Activated CD4-positive, alpha-beta T cell treated with anti-CD3 and anti-CD28 coated beads for 36 hours (primary cell): ENCODE measurements at regions of chr14 and their contacts with region 1.

Region 1: GRCh38 chr14:105248368-105248756 is at the start of gene BTBD6:
- DNase-seq: peak; percentile 93
- ATAC-seq: peak; percentile 97
- H3K4me3 Mint-ChIP-seq: peak within 1 kb of the TSS; percentile 74
- H3K27ac Mint-ChIP-seq: peak within 1 kb of the TSS; percentile 51
- H3K4me1 Mint-ChIP-seq: peaks cover 15% of the 10 kb centered on the region
- H3K27me3 Mint-ChIP-seq: no peaks in the 10 kb centered on the region
- total RNA-seq, gene BTBD6: 18.9 to 23.2 TPM

Region 2: DNA sequence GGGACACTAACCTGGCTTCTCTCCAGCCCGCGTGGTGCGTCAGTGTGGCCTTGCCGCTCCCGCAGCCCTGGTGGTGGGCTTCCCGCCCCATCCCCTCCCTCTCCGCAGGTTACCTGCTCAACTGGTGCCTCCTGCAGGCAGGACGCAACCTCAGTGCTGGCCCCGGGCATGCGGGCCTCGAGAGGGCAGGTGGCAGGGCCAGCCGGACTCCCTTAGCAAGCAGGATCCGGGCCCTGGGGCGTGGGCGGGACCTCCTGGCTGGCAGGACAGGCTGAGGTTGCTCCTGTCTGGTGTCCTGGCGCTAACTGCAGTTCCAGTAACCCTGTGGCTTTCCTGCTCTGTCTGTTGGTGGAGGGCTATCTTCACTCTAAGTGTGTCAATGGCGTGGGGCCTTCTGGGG is 532.9 kb before region 1 on chr14:
- CTCF ChIA-PET with region 1: no interaction called
- POLR2A ChIA-PET with region 1: no interaction called
- intact Hi-C with region 1: no loop called
- DNase-seq: no peak
- ATAC-seq: no peak
- H3K4me3 Mint-ChIP-seq: no peak overlapping the region
- H3K27ac Mint-ChIP-seq: no peak overlapping the region
- H3K4me1 Mint-ChIP-seq: no peaks in the 10 kb centered on the region
- H3K27me3 Mint-ChIP-seq: no peaks in the 10 kb centered on the region

Region 3: GRCh38 chr14:105168979-105169507 is 79.3 kb before region 1 on chr14:
- CTCF ChIA-PET with region 1: no interaction called
- POLR2A ChIA-PET with region 1: no interaction called
- intact Hi-C with region 1: loop called in 1 of 2 experiments (anchors 10 kb)
- DNase-seq: peak; percentile 69
- ATAC-seq: peak; percentile 55
- H3K4me3 Mint-ChIP-seq: peak overlapping the region; percentile 53
- H3K27ac Mint-ChIP-seq: no peak overlapping the region
- H3K4me1 Mint-ChIP-seq: peaks cover 4% of the 10 kb centered on the region
- H3K27me3 Mint-ChIP-seq: peaks cover 6% of the 10 kb centered on the region

Region 4: DNA sequence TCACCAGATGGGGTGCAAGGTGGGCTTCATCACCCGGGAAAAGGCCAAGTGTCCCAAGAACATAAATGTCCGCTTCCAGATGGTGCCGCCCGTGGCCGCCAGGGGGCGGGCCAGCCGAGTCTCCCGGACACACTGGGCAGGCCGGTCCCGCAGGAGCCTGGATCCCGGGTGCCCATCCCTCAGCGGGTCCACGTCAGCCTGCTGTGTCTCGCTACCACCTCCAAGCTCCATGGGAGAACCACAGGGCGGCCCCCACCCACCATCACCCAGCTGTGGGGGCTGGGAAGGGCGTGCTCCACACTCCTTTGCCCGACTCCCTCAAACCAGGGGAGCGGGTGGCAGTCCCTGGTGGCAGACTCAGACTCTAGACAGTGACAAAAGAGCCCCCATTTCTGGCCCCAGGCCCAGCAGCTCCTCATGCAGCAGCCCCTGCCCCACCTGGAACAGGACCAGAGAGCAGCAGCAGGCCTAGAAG is 45.3 kb before region 1 on chr14:
- CTCF ChIA-PET with region 1: no interaction called
- POLR2A ChIA-PET with region 1: no interaction called
- intact Hi-C with region 1: loop called in 1 of 2 experiments (anchors 1 kb)
- DNase-seq: peak; percentile 78
- ATAC-seq: peak; percentile 52
- H3K4me3 Mint-ChIP-seq: no peak overlapping the region
- H3K27ac Mint-ChIP-seq: no peak overlapping the region
- H3K4me1 Mint-ChIP-seq: peaks cover 7% of the 10 kb centered on the region
- H3K27me3 Mint-ChIP-seq: peaks cover 14% of the 10 kb centered on the region

Region 5: DNA sequence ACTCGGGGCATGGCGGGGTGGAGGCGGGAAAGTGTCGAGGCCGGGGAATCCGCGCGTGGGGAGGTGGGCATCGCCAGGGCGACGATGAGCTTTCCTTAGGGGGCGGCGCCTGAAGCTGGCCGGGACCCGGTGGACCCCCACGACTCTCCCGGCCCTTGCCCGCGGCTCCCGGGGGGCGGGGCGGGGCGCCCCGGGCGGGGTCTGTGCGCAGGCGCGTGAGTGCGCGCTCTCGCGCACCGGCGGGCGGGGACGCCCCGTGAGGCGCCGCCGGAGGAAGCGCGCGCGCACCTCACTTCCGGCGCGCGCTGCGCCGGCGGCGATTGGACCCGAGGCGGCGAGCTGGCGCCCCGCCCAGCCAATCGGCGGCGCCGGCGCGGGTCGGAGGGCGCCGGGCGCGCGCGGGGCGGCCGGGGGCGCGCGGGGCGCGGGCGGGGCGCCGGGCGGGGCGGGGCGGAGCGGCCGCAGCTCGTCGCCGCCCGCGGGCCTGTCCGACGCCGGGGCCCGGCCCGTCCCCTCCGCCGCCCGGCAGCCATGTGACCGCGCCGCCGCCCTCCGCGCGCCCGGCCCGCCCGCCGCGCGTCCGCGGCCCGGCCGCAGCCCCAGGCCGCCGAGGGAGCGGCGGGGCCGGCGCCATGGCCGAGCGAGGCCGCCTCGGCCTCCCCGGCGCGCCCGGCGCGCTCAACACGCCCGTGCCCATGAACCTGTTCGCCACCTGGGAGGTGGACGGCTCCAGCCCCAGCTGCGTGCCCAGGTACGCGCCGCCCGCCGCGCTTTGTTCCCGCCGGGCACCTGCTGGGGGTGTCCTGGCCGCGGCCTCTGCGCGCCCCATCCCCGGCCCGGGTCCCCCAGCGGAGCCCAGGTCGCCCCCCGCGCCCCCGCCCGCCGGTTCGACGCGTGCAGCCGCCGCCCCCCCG is 66.2 kb after region 1 on chr14 and contains the start of gene PACS2:
- CTCF ChIA-PET with region 1: interaction called, 3 read pairs
- POLR2A ChIA-PET with region 1: no interaction called
- intact Hi-C with region 1: loop called in 1 of 2 experiments (anchors 1 kb)
- DNase-seq: peak; percentile 86
- ATAC-seq: peak; percentile 79
- H3K4me3 Mint-ChIP-seq: peak within 1 kb of the TSS; percentile 84
- H3K27ac Mint-ChIP-seq: peak within 1 kb of the TSS; percentile 71
- H3K4me1 Mint-ChIP-seq: peaks cover 30% of the 10 kb centered on the region
- H3K27me3 Mint-ChIP-seq: no peaks in the 10 kb centered on the region
- total RNA-seq, gene PACS2: 30.6 to 32.9 TPM